Caco-2 (cell line): ENCODE measurements at regions of chr5 and their contacts with region 1.

Region 1: DNA sequence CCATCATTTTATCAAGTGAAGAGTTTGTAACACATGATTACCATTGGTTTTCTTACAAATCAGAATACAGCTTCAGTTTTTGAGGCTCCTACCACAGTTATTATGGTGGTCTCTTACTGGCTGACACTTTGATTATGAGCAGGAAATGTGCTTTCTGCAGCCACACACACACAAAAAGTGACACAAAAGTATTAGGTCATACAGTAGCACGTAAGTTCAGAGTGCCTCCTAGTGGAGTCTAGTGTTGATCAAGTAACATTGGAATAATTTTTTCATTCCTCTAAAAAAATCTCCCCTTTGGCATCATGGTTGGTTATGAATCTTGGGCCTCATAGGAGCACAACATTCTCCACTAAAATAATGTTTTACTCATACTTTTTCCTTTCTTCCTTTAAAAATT is 37.6 kb downstream of the PAM start:
- DNase-seq: no peak
- H3K4me3 ChIP-seq: no peak overlapping the region
- H3K4me3 Mint-ChIP-seq: no peak overlapping the region
- H3K27ac Mint-ChIP-seq: no peak overlapping the region
- H3K4me1 ChIP-seq: peaks cover 39% of the 10 kb centered on the region
- H3K4me1 Mint-ChIP-seq: peaks cover 14% of the 10 kb centered on the region
- H3K27me3 ChIP-seq: no peaks in the 10 kb centered on the region
- H3K27me3 Mint-ChIP-seq: no peaks in the 10 kb centered on the region
- CTCF ChIP-seq: peak; percentile 10 to 16

Region 2: GRCh38 chr5:102922799-102923477 is 130.2 kb after region 1 on chr5:
- CTCF ChIA-PET with region 1: no interaction called
- POLR2A ChIA-PET with region 1: no interaction called
- intact Hi-C with region 1: loop called (anchors 5 kb)
- DNase-seq: no peak
- H3K4me3 ChIP-seq: no peak overlapping the region
- H3K4me3 Mint-ChIP-seq: no peak overlapping the region
- H3K27ac Mint-ChIP-seq: no peak overlapping the region
- H3K4me1 ChIP-seq: no peaks in the 10 kb centered on the region
- H3K4me1 Mint-ChIP-seq: peaks cover 6% of the 10 kb centered on the region
- H3K27me3 ChIP-seq: no peaks in the 10 kb centered on the region
- H3K27me3 Mint-ChIP-seq: no peaks in the 10 kb centered on the region
- CTCF ChIP-seq: no peak

Region 3: GRCh38 chr5:102991802-102992201 is 199.1 kb after region 1 on chr5:
- CTCF ChIA-PET with region 1: no interaction called
- POLR2A ChIA-PET with region 1: no interaction called
- intact Hi-C with region 1: no loop called
- DNase-seq: no peak
- H3K4me3 ChIP-seq: no peak overlapping the region
- H3K4me3 Mint-ChIP-seq: no peak overlapping the region
- H3K27ac Mint-ChIP-seq: no peak overlapping the region
- H3K4me1 ChIP-seq: no peaks in the 10 kb centered on the region
- H3K4me1 Mint-ChIP-seq: no peaks in the 10 kb centered on the region
- H3K27me3 ChIP-seq: no peaks in the 10 kb centered on the region
- H3K27me3 Mint-ChIP-seq: no peaks in the 10 kb centered on the region
- CTCF ChIP-seq: no peak

Region 4: DNA sequence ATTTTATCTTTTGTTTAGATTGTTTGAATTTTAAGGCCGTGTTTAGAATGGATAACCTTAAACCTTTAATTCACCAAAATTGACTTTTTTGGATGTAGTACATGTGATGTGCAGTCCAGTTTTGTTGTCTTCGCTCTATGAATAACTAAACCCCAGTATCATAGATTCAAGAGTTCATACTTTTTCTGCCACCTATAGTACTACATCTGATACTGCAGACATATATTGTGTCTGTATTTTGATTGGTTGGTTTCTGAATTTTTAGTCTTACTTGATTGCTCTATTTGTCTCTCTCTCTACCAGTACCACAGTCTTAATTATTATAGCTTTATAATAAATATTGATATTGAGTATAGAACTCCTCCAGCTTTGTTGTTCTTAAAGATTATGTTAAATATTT is 385.5 kb after region 1 on chr5:
- CTCF ChIA-PET with region 1: no interaction called
- POLR2A ChIA-PET with region 1: no interaction called
- intact Hi-C with region 1: no loop called
- DNase-seq: no peak
- H3K4me3 ChIP-seq: no peak overlapping the region
- H3K4me3 Mint-ChIP-seq: no peak overlapping the region
- H3K27ac Mint-ChIP-seq: no peak overlapping the region
- H3K4me1 ChIP-seq: 0 out of 2 replicates have a peak, but pooled peaks cover 7% of the 10 kb centered on the region
- H3K4me1 Mint-ChIP-seq: no peaks in the 10 kb centered on the region
- H3K27me3 ChIP-seq: no peaks in the 10 kb centered on the region
- H3K27me3 Mint-ChIP-seq: no peaks in the 10 kb centered on the region
- CTCF ChIP-seq: no peak

Region 5: DNA sequence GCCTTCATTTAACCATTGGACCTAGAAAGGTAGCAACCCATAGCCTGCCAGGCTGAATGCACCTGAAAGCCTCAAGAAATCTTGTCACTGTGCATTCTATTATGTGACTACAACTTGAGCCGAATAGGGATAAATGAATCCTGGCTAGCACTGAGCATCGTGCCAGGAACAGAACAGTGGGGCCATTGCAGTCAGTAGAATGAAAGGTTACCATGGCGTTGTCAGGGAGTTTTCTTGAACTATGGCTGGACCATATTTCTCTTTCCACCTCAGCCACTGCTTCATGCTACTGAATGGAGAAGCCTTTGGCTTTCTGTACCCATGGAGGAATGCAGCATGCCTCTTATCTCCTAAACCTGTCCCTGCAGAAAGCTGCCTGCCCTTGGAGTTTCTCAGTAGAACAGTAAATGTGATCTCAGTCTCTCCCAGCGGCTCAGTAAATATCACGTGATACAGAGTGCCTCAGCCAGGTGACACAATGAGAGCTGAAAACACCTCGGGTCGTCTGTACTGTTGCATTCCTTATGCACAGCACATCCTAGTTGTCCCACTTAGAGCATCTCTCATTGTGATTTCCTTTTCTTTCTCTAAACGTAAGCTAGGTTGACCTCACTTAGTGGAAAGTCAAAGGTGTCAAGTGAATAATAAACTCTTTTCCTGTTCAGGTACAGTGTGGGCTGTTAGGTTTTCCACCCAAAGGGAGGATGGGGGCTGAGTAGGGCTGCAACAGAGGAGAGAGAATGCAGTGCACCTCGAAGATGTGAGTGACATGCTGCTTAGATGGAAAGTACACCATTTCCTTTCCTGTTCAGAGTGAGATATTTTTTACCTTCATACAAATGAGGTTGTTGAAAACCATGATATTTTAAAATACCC is 581.1 kb after region 1 on chr5:
- CTCF ChIA-PET with region 1: no interaction called
- POLR2A ChIA-PET with region 1: no interaction called
- intact Hi-C with region 1: no loop called
- DNase-seq: peak; percentile 42 to 62
- H3K4me3 ChIP-seq: no peak overlapping the region
- H3K4me3 Mint-ChIP-seq: no peak overlapping the region
- H3K27ac Mint-ChIP-seq: no peak overlapping the region
- H3K4me1 ChIP-seq: peaks cover 34% of the 10 kb centered on the region
- H3K4me1 Mint-ChIP-seq: peaks cover 27% of the 10 kb centered on the region
- H3K27me3 ChIP-seq: no peaks in the 10 kb centered on the region; the same call in 1 of the 2 replicates
- H3K27me3 Mint-ChIP-seq: no peaks in the 10 kb centered on the region
- CTCF ChIP-seq: no peak